T-cell (primary cell): ENCODE measurements at regions of chr13 and their contacts with region 1.

Region 1: GRCh38 chr13:74476365-74476764 is 342.2 kb upstream of the KLF12 start:
- DNase-seq: no peak
- ATAC-seq: no peak
- H3K4me3 ChIP-seq: no peak overlapping the region
- H3K4me3 Mint-ChIP-seq: no peak overlapping the region
- H3K27ac ChIP-seq: no peak overlapping the region
- H3K27ac Mint-ChIP-seq: no peak overlapping the region
- H3K4me1 ChIP-seq: no peaks in the 10 kb centered on the region
- H3K4me1 Mint-ChIP-seq: no peaks in the 10 kb centered on the region
- H3K27me3 ChIP-seq: no peaks in the 10 kb centered on the region
- H3K27me3 Mint-ChIP-seq: peaks cover 0 to 4% of the 10 kb centered on the region in 2 donors

Region 2: DNA sequence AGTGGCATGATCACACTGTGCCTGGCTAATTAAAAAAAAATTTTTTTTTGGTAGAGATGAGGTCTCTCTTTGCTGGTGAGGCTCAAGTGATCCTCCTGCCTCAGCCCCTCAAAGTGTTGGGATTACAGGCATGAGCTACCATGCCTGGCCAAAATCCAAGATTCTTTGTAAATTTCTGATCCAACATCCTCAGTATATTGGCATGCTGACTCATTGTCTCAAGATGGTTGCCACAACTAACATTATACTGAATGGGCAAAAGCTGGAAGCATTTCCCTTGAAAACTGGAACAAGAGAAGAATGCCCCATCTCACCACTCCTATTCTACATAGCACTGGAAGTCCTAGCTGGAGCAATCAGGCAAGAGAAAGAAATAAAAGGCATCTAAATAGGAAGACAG is 1317.5 kb before region 1 on chr13:
- CTCF ChIA-PET with region 1: interaction called in 1 of 2 experiments, 11 read pairs
- POLR2A ChIA-PET with region 1: no interaction called
- DNase-seq: no peak
- ATAC-seq: no peak
- H3K4me3 ChIP-seq: no peak overlapping the region
- H3K4me3 Mint-ChIP-seq: no peak overlapping the region
- H3K27ac ChIP-seq: no peak overlapping the region
- H3K27ac Mint-ChIP-seq: no peak overlapping the region
- H3K4me1 ChIP-seq: no peaks in the 10 kb centered on the region
- H3K4me1 Mint-ChIP-seq: no peaks in the 10 kb centered on the region
- H3K27me3 ChIP-seq: no peaks in the 10 kb centered on the region
- H3K27me3 Mint-ChIP-seq: no peaks in the 10 kb centered on the region

Region 3: GRCh38 chr13:74586847-74587246 is 110.5 kb after region 1 on chr13:
- CTCF ChIA-PET with region 1: no interaction called
- POLR2A ChIA-PET with region 1: no interaction called
- DNase-seq: no peak
- ATAC-seq: no peak
- H3K4me3 ChIP-seq: no peak overlapping the region
- H3K4me3 Mint-ChIP-seq: no peak overlapping the region
- H3K27ac ChIP-seq: no peak overlapping the region
- H3K27ac Mint-ChIP-seq: no peak overlapping the region
- H3K4me1 ChIP-seq: no peaks in the 10 kb centered on the region
- H3K4me1 Mint-ChIP-seq: no peaks in the 10 kb centered on the region
- H3K27me3 ChIP-seq: peaks cover 0 to 2% of the 10 kb centered on the region in 2 experiments
- H3K27me3 Mint-ChIP-seq: peaks cover 5 to 43% of the 10 kb centered on the region in 2 donors